ENCODE measurements at regions of chr5 and their contacts with region 1.

Region 1: GRCh38 chr5:71601222-71602041 is 14.3 kb downstream of the MCCC2 start:
- DNase-seq: peak; percentile 90
- ATAC-seq: peak; percentile 92
- H3K4me3 Mint-ChIP-seq: peak overlapping the region; percentile 35
- H3K27ac Mint-ChIP-seq: peak overlapping the region; percentile 97
- H3K4me1 Mint-ChIP-seq: peaks cover 35% of the 10 kb centered on the region
- H3K27me3 Mint-ChIP-seq: no peaks in the 10 kb centered on the region
- CTCF ChIP-seq: peak; percentile 80

Region 2: GRCh38 chr5:71586941-71587765 is 14.3 kb before region 1 on chr5 and contains the start of gene MCCC2:
- CTCF ChIA-PET with region 1: interaction called, 38 read pairs
- POLR2A ChIA-PET with region 1: interaction called, 40 read pairs
- intact Hi-C with region 1: loop called (anchors 2 kb)
- DNase-seq: peak; percentile 99
- ATAC-seq: peak; percentile 99
- H3K4me3 Mint-ChIP-seq: peak within 1 kb of the TSS; percentile 80
- H3K27ac Mint-ChIP-seq: peak within 1 kb of the TSS; percentile 98
- H3K4me1 Mint-ChIP-seq: peaks cover 34% of the 10 kb centered on the region
- H3K27me3 Mint-ChIP-seq: no peaks in the 10 kb centered on the region
- CTCF ChIP-seq: no peak
- total RNA-seq, gene MCCC2: 60.0 to 60.4 TPM

Region 3: DNA sequence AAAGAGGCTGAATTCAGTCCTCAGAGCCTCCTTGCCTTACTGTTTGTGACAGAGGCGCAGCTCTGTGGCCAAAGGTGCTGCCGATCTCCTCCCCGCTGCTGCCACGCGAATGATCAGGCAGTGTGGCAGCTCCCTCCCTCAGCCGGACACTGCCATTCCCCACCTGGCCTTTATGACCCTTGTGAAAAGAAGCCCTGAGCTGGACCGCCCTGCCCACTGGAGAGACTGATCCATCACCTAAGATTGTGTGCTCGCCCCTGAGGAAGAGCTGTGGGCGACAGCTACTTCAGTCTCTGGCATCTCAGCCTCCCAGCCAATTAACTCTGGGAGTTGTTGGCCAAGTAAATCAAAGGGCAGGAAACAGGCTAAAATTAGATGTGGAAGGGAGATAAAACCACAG is 208.6 kb after region 1 on chr5:
- CTCF ChIA-PET with region 1: no interaction called
- POLR2A ChIA-PET with region 1: no interaction called
- intact Hi-C with region 1: no loop called
- DNase-seq: no peak
- ATAC-seq: no peak
- H3K4me3 Mint-ChIP-seq: no peak overlapping the region
- H3K27ac Mint-ChIP-seq: no peak overlapping the region
- H3K4me1 Mint-ChIP-seq: peaks cover 6% of the 10 kb centered on the region
- H3K27me3 Mint-ChIP-seq: peaks cover 12% of the 10 kb centered on the region
- CTCF ChIP-seq: no peak

Measured in activated CD8-positive, alpha-beta T cell treated with anti-CD3 and anti-CD28 coated beads for 36 hours (primary cell).